HepG2 (cell line): ENCODE measurements at regions of chr1 and their contacts with region 1.

Region 1: GRCh38 chr1:93814059-93814794 is 64.8 kb downstream of the DNTTIP2 start:
- DNase-seq: peak; percentile 79
- ATAC-seq: peak; percentile 84
- H3K4me3 ChIP-seq: no peak overlapping the region
- H3K27ac ChIP-seq: no peak overlapping the region
- H3K4me1 ChIP-seq: peaks cover 30% of the 10 kb centered on the region
- H3K27me3 ChIP-seq: no peaks in the 10 kb centered on the region
- CTCF ChIP-seq: peak; percentile 99
- EP300 ChIP-seq: no peak; a peak in 1 of 4 replicates
- POLR2A ChIP-seq: no peak
- RAD21 ChIP-seq: peak; percentile 98

Region 2: GRCh38 chr1:93629099-93630059 is 184.8 kb before region 1 on chr1:
- CTCF ChIA-PET with region 1: interaction called, 89 read pairs
- POLR2A ChIA-PET with region 1: interaction called, 17 read pairs
- in situ Hi-C with region 1: loop called (anchors 5 kb)
- intact Hi-C with region 1: loop called (anchors 1 kb)
- DNase-seq: peak; percentile 65
- ATAC-seq: peak; percentile 71
- H3K4me3 ChIP-seq: no peak overlapping the region
- H3K27ac ChIP-seq: no peak overlapping the region
- H3K4me1 ChIP-seq: peaks cover 26% of the 10 kb centered on the region
- H3K27me3 ChIP-seq: no peaks in the 10 kb centered on the region
- CTCF ChIP-seq: peak; percentile 84
- EP300 ChIP-seq: no peak
- POLR2A ChIP-seq: no peak
- RAD21 ChIP-seq: peak; percentile 89

Region 3: GRCh38 chr1:93734999-93735398 is 79.2 kb before region 1 on chr1:
- CTCF ChIA-PET with region 1: interaction called, 5 read pairs
- POLR2A ChIA-PET with region 1: interaction called, 3 read pairs
- in situ Hi-C with region 1: no loop called
- intact Hi-C with region 1: loop called (anchors 1 kb)
- DNase-seq: peak; percentile 41
- ATAC-seq: peak; percentile 90
- H3K4me3 ChIP-seq: no peak overlapping the region
- H3K27ac ChIP-seq: no peak overlapping the region
- H3K4me1 ChIP-seq: peaks cover 21% of the 10 kb centered on the region
- H3K27me3 ChIP-seq: no peaks in the 10 kb centered on the region
- CTCF ChIP-seq: peak; percentile 51
- EP300 ChIP-seq: no peak
- POLR2A ChIP-seq: no peak
- RAD21 ChIP-seq: peak; percentile 47; the same call in 1 of the 2 replicates

Region 4: DNA sequence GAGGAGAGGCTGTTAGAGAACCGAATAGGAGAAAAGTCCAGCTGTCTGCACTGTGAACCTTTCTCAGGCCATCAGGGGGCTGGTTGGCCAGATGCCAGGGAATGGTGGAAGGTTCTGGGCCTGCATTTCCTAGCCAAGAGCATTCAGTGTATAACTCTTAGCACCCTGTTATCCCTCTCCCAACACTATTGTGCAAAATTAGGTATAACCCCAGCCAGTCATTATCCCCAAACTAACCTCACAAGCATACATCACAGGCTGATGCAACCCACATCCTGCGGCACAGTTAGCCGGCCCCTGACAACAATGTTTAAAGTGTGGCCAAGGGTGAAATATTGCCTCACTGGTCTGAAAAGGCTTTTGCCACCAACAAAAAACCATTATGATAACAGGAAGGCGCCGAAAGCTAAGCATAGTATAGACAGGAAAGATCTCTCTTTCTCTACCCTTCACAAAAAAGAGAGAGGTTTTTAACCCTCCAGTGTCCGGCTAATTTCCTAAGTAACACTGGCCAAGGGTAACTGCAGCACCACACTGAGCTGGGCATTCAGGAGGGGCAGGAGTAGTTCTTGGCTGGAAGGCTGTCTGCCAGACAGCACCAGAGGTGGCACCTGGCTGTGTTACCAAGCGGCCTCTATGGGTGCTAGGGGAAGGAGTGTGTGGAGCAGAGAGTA is 55.2 kb before region 1 on chr1:
- CTCF ChIA-PET with region 1: no interaction called
- POLR2A ChIA-PET with region 1: interaction called, 9 read pairs
- in situ Hi-C with region 1: no loop called
- intact Hi-C with region 1: loop called (anchors 5 kb)
- DNase-seq: peak; percentile 94
- ATAC-seq: peak; percentile 90
- H3K4me3 ChIP-seq: peak overlapping the region in 1 of 3 experiments; percentile 47; a peak in 1 of 6 replicates
- H3K27ac ChIP-seq: peak overlapping the region; percentile 89
- H3K4me1 ChIP-seq: peaks cover 71% of the 10 kb centered on the region
- H3K27me3 ChIP-seq: no peaks in the 10 kb centered on the region
- CTCF ChIP-seq: peak; percentile 41
- EP300 ChIP-seq: peak; percentile 86 to 94; a peak in 3 of 4 replicates
- POLR2A ChIP-seq: peak in 1 of 2 experiments; percentile 39; a peak in 1 of 4 replicates
- RAD21 ChIP-seq: no peak; the same call in 1 of the 2 replicates

Region 5: GRCh38 chr1:93980320-93981273 is 166.4 kb after region 1 on chr1:
- CTCF ChIA-PET with region 1: no interaction called
- POLR2A ChIA-PET with region 1: no interaction called
- in situ Hi-C with region 1: no loop called
- intact Hi-C with region 1: no loop called
- DNase-seq: peak; percentile 58
- ATAC-seq: peak; percentile 92
- H3K4me3 ChIP-seq: peak overlapping the region; percentile 41 to 70 (median 49)
- H3K27ac ChIP-seq: peak overlapping the region; percentile 72
- H3K4me1 ChIP-seq: peaks cover 51% of the 10 kb centered on the region
- H3K27me3 ChIP-seq: 0 out of 5 replicates have a peak, but pooled peaks cover 0 to 3% of the 10 kb centered on the region in 2 experiments
- CTCF ChIP-seq: peak; percentile 81
- EP300 ChIP-seq: no peak
- POLR2A ChIP-seq: no peak
- RAD21 ChIP-seq: peak; percentile 49